Activated B cell treated with CpG ODN at 0.5 μM for 24 hours (primary cell): ENCODE measurements at regions of chr1 and their contacts with region 1.

Region 1: GRCh38 chr1:24930204-24931145 is at the start of gene RUNX3:
- DNase-seq: peak; percentile 94
- ATAC-seq: peak; percentile 87
- H3K4me3 Mint-ChIP-seq: peak within 1 kb of the TSS; percentile 98
- H3K27ac Mint-ChIP-seq: peak within 1 kb of the TSS; percentile 96
- H3K4me1 Mint-ChIP-seq: peaks cover 73% of the 10 kb centered on the region
- H3K27me3 Mint-ChIP-seq: no peaks in the 10 kb centered on the region
- CTCF ChIP-seq: no peak
- total RNA-seq, gene RUNX3: 141 and 153 TPM in 2 replicates

Region 2: GRCh38 chr1:24502709-24503058 is 427.8 kb before region 1 on chr1 and contains the start of gene RCAN3:
- CTCF ChIA-PET with region 1: no interaction called
- POLR2A ChIA-PET with region 1: no interaction called
- intact Hi-C with region 1: loop called (anchors 5 kb)
- DNase-seq: peak; percentile 89
- ATAC-seq: peak; percentile 86
- H3K4me3 Mint-ChIP-seq: peak within 1 kb of the TSS; percentile 91
- H3K27ac Mint-ChIP-seq: peak within 1 kb of the TSS; percentile 97
- H3K4me1 Mint-ChIP-seq: peaks cover 52% of the 10 kb centered on the region
- H3K27me3 Mint-ChIP-seq: no peaks in the 10 kb centered on the region
- CTCF ChIP-seq: no peak
- total RNA-seq, gene RCAN3: 22.8 and 23.6 TPM in 2 replicates

Region 3: GRCh38 chr1:24861821-24862727 is 68.4 kb before region 1 on chr1:
- CTCF ChIA-PET with region 1: no interaction called
- POLR2A ChIA-PET with region 1: no interaction called
- intact Hi-C with region 1: no loop called
- DNase-seq: no peak
- ATAC-seq: no peak
- H3K4me3 Mint-ChIP-seq: no peak overlapping the region
- H3K27ac Mint-ChIP-seq: no peak overlapping the region
- H3K4me1 Mint-ChIP-seq: peaks cover 7% of the 10 kb centered on the region
- H3K27me3 Mint-ChIP-seq: peaks cover 15% of the 10 kb centered on the region
- CTCF ChIP-seq: no peak

Region 4: DNA sequence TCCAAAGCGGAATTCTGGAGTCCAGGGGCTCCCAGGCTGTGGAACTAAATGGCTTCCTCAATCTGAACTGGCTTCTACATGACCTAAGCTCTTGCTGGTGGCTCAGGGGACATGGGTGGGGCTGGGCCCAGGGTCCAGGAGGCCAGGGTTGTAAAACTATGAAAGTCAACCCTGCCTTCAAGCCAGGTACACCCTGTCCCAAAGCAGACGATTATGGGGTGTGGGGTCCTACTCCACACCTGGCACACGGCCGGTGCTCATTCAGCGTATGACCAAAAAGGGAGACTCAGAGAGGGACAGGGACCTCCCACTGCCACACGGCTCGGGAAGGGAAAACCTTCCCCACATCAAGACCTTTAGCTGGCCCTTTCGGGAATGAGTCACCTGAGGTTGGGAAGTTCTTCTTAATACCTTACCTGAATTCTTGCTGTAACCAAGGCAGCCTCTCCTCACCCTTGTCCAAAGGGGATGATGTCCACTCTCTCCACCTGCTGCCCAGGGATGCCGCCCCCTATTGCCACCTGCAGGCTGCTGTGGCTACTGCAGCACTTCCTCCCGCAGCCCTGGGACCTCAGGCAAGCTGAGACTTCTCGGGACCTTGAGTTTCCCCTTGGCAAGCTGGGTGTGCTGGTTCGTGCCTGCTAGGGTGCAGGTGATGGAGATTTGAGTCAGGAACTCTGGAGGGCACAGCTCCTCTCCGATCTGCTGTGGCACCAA is 32.5 kb before region 1 on chr1:
- CTCF ChIA-PET with region 1: no interaction called
- POLR2A ChIA-PET with region 1: interaction called, 20 read pairs
- intact Hi-C with region 1: loop called (anchors 2 kb)
- DNase-seq: peak; percentile 32
- ATAC-seq: peak; percentile 76
- H3K4me3 Mint-ChIP-seq: no peak overlapping the region
- H3K27ac Mint-ChIP-seq: peak overlapping the region; percentile 59
- H3K4me1 Mint-ChIP-seq: peaks cover 36% of the 10 kb centered on the region
- H3K27me3 Mint-ChIP-seq: no peaks in the 10 kb centered on the region
- CTCF ChIP-seq: no peak

Region 5: DNA sequence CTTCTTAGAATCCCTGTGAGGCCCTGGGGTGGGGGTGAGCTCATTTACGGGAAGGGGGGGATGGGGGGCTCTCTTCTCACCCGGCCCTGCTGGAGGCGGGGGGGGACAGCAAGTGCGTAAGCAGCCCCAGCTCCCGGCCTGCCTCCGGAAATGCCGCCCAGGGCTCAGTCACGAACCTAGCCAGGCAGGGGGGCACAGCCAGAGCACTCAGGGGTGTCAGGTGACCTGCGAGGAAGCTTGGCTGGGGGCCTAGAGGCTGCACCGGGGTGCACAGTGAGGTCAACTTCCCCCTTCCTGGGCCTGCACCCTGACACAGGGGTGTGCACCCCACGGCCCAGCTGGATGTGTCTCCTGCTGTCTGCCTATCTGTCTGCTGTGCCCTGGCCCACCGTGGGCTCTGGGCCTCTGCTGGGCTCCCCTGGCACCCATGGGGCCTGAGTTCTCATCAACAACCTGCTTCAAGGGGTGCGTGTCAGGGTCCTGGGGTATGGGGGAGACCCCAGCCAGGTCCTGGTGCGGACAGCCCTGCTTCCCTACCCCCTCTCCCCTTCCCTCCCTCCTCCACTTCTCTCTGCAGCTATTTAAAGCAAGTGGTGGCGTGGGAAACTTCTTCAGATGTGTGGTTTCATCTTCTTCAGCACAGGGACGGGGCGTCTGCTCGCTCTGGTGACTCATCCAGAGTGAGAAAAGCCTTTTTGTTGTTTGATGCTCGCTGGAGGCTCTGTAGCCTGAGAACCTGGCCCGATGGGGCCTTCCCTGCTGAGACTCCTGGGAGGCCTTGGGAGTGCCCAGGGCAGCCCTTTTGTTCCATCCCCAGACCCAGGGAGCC is 92.1 kb after region 1 on chr1:
- CTCF ChIA-PET with region 1: interaction called, 12 read pairs
- POLR2A ChIA-PET with region 1: interaction called, 385 read pairs
- intact Hi-C with region 1: loop called (anchors 1 kb)
- DNase-seq: peak; percentile 84
- ATAC-seq: peak; percentile 79
- H3K4me3 Mint-ChIP-seq: peak overlapping the region; percentile 52
- H3K27ac Mint-ChIP-seq: peak overlapping the region; percentile 91
- H3K4me1 Mint-ChIP-seq: peaks cover 71% of the 10 kb centered on the region
- H3K27me3 Mint-ChIP-seq: no peaks in the 10 kb centered on the region
- CTCF ChIP-seq: no peak

Region 6: DNA sequence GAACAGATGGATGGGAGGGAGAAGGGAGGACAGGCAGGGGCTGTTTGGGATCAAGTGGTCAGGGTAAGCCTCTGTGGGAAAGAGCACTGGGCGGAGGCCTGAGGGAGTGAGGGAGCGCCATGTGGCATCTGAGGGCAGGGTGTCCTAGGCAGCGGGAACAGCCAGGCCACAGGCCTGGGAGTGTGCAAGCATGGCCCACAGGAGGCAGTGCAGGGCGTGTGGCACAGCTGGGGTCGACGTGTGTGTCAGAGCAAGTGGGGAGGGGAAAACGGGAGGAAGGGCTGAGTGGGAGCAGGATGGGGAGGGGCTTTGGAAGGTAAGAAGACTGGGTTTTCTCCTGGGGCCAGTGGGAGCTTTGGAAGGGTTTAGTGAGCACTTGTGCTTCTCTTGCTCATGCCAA is 158.5 kb after region 1 on chr1:
- CTCF ChIA-PET with region 1: no interaction called
- POLR2A ChIA-PET with region 1: no interaction called
- intact Hi-C with region 1: no loop called
- DNase-seq: no peak
- ATAC-seq: no peak
- H3K4me3 Mint-ChIP-seq: no peak overlapping the region
- H3K27ac Mint-ChIP-seq: no peak overlapping the region
- H3K4me1 Mint-ChIP-seq: peaks cover 6% of the 10 kb centered on the region
- H3K27me3 Mint-ChIP-seq: no peaks in the 10 kb centered on the region
- CTCF ChIP-seq: no peak

Region 7: DNA sequence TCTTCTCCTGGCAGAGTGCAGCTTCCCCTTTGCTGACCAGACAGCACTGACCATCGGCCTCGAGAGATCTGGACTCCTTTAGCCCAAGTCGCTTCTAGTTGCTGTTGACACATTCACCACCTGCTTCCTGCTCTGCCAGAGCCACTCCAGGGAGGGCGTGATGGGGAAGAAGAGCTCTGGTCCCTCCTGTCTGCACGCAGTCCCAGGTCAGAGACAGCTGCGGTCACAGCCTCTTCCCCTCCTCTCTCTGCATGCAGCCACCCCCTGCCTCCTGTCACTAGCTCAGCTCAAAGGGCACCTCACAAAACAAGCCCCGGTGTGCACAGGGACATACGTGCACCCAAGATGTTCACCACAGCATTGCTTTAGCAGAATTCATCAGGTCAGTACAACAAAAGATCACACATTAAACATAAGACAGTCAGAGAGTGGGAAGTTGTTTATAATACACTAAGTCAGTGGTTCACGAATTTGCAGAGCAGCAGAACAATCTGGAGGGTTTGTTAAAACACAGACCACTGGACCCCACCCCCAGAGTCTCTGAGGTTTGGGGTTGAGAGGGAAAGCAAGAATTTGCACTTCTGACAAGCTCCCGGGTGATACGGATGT is 169.0 kb after region 1 on chr1:
- CTCF ChIA-PET with region 1: interaction called, 22 read pairs
- POLR2A ChIA-PET with region 1: interaction called, 24 read pairs
- intact Hi-C with region 1: loop called (anchors 1 kb)
- DNase-seq: no peak
- ATAC-seq: peak; percentile 18
- H3K4me3 Mint-ChIP-seq: no peak overlapping the region
- H3K27ac Mint-ChIP-seq: no peak overlapping the region
- H3K4me1 Mint-ChIP-seq: peaks cover 40% of the 10 kb centered on the region
- H3K27me3 Mint-ChIP-seq: no peaks in the 10 kb centered on the region
- CTCF ChIP-seq: no peak

Region 8: GRCh38 chr1:25239681-25240541 is 309.4 kb after region 1 on chr1:
- CTCF ChIA-PET with region 1: no interaction called
- POLR2A ChIA-PET with region 1: no interaction called
- intact Hi-C with region 1: loop called (anchors 10 kb)
- DNase-seq: peak; percentile 79
- ATAC-seq: peak; percentile 87
- H3K4me3 Mint-ChIP-seq: peak overlapping the region; percentile 96
- H3K27ac Mint-ChIP-seq: peak overlapping the region; percentile 97
- H3K4me1 Mint-ChIP-seq: peaks cover 66% of the 10 kb centered on the region
- H3K27me3 Mint-ChIP-seq: no peaks in the 10 kb centered on the region
- CTCF ChIP-seq: no peak

Region 9: DNA sequence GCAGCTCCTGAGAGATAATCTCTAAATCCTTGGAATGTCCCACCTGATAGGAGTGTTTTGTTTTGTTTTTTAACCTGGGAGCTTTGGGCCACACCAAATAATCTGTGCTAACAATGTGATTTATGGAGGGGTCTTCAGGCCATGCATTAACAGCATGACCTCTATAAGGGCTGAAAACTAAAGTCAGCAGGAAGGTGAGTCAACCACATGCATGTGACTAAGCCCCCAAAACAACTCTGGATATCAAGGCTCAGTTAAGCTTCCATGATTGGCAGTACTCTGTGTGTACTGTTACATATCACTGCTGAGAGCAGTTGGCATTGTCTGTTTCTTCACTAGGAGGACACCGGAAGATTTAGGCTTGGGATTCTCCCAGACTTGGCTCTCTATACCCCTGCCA is 918.1 kb after region 1 on chr1:
- CTCF ChIA-PET with region 1: no interaction called
- POLR2A ChIA-PET with region 1: no interaction called
- intact Hi-C with region 1: no loop called
- DNase-seq: no peak
- ATAC-seq: no peak
- H3K4me3 Mint-ChIP-seq: no peak overlapping the region
- H3K27ac Mint-ChIP-seq: no peak overlapping the region
- H3K4me1 Mint-ChIP-seq: peaks cover 5% of the 10 kb centered on the region
- H3K27me3 Mint-ChIP-seq: no peaks in the 10 kb centered on the region
- CTCF ChIP-seq: no peak